Activated T-helper 2 cell treated with anti-CD3 and anti-CD28 coated beads, Interferon-gamma antibody, Interleukin-2, Interleukin-4, amounts not matched to agents 10 μg/mL and 5 μg/mL and 100 μg/mL, durations not matched to agents 14 hours and 24 hours and 36 hours (primary cell): ENCODE measurements at regions of chr6 and their contacts with region 1.

Region 1: DNA sequence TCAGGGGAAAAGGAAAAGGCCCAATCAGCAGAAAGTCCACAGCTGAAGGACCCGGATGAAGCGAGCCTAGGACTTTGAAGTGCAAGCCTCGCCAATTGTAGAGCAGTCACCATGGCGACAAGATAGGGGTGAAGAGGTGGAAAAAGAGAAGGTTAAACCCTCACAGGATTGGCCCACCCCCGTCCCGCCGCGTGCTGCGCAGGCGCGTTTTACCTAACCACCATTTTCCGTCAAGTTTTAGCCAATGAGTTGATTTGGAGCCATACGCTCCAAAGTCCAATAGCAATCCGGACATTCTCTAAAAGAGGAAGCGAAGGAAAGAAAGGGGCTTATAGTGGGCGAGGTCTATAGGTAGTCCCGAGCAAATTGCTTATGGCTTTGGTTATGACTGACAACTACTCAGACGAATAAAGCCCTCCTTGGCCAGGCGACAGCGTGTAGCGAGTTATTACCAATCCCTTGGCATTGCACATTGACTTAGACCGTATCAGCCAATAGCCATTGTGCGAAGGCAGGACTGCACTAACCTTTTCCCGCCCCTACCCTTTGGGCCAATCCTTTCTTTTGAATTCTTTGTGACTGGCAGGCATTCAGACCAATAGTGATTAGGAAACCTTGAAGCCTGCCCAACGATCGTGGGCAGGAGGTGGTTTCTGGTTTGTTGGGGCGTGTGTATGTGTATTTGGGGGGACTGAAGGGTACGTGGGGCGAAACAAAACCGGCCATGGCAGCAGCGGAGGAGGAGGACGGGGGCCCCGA is at the start of gene RNF5:
- DNase-seq: peak; percentile 93
- H3K4me3 Mint-ChIP-seq: peak within 1 kb of the TSS; percentile 96
- H3K27ac Mint-ChIP-seq: peak within 1 kb of the TSS; percentile 97
- H3K4me1 Mint-ChIP-seq: peaks cover 50% of the 10 kb centered on the region
- H3K27me3 Mint-ChIP-seq: no peaks in the 10 kb centered on the region
- total RNA-seq, gene RNF5: 61.9 and 63.8 TPM in 2 replicates

Region 2: GRCh38 chr6:31958741-31959739 is 218.9 kb before region 1 on chr6 and contains the starts of genes NELFE and SKIC2:
- intact Hi-C with region 1: loop called (anchors 5 kb)
- DNase-seq: peak; percentile 99
- H3K4me3 Mint-ChIP-seq: peak within 1 kb of the TSS; percentile 93
- H3K27ac Mint-ChIP-seq: peak within 1 kb of the TSS; percentile 98
- H3K4me1 Mint-ChIP-seq: peaks cover 25% of the 10 kb centered on the region
- H3K27me3 Mint-ChIP-seq: no peaks in the 10 kb centered on the region
- total RNA-seq, gene NELFE: 81.2 and 82.0 TPM in 2 replicates
- total RNA-seq, gene SKIC2: 93.7 and 99.5 TPM in 2 replicates

Region 3: DNA sequence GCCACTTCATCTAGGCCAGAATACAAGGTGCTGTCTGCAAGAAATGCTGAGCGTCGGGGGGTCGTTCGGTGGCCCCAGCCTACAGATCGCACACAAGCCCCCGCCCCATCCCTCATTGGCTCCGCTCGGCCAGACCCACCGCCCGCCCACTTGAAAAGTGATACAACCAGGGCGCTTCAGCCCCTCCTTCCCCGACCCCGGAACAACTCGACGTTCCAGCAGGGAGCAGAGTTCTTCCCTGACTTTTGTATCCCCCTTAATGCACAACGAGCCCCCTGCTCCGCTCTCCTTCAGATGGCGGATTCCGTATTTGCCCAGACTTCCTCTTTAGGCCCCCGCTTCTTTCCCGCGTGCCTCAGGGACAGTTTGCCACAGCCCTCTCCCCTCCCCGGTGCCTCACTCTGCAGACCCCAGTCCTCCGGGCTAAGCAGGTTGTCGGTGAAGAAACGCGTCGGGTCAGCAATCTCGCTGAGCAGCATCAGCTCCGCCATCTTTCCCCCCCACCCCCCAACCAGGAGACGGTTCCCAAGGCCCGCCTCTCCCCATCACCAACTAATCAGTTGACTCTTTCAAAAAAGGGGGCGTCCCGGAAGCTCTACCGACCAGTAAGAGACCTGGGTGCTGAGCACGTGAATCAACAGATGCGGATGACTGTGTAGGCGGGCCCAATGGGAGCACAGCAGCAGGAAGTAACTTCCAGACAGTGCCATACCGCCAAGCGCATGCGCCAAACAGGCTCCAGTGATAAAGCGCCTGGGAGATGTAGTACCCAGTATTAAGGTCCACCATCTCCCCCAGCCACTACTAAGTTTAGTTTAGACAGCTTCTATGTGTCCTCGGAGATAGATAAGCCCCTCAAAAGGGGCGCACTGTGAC is 50.0 kb before region 1 on chr6 and contains the start of gene ATF6B:
- intact Hi-C with region 1: loop called (anchors 1 kb)
- DNase-seq: peak; percentile 98
- H3K4me3 Mint-ChIP-seq: peak within 1 kb of the TSS; percentile 99
- H3K27ac Mint-ChIP-seq: peak within 1 kb of the TSS; percentile 97
- H3K4me1 Mint-ChIP-seq: peaks cover 36% of the 10 kb centered on the region
- H3K27me3 Mint-ChIP-seq: no peaks in the 10 kb centered on the region
- total RNA-seq, gene ATF6B: 86.9 and 91.2 TPM in 2 replicates

Region 4: GRCh38 chr6:32153564-32154513 is 24.1 kb before region 1 on chr6 and contains the start of gene PPT2:
- intact Hi-C with region 1: loop called (anchors 1 kb)
- DNase-seq: peak; percentile 55
- H3K4me3 Mint-ChIP-seq: peak within 1 kb of the TSS; percentile 91
- H3K27ac Mint-ChIP-seq: peak within 1 kb of the TSS; percentile 82
- H3K4me1 Mint-ChIP-seq: peaks cover 18% of the 10 kb centered on the region
- H3K27me3 Mint-ChIP-seq: peaks cover 31% of the 10 kb centered on the region
- total RNA-seq, gene PPT2: 11.5 and 12.7 TPM in 2 replicates

Region 5: GRCh38 chr6:32195652-32195901 is 17.6 kb after region 1 on chr6:
- intact Hi-C with region 1: loop called (anchors 1 kb)
- DNase-seq: peak; percentile 100
- H3K4me3 Mint-ChIP-seq: peak overlapping the region; percentile 98
- H3K27ac Mint-ChIP-seq: peak overlapping the region; percentile 99
- H3K4me1 Mint-ChIP-seq: peaks cover 33% of the 10 kb centered on the region
- H3K27me3 Mint-ChIP-seq: no peaks in the 10 kb centered on the region